ENCODE measurements at regions of chr15 and their contacts with region 1.

Region 1: GRCh38 chr15:87672309-87673288 is 583.9 kb downstream of the NTRK3 start:
- DNase-seq: peak; percentile 41
- ATAC-seq: peak; percentile 86
- H3K4me3 ChIP-seq: no peak overlapping the region
- H3K27ac ChIP-seq: no peak overlapping the region
- H3K4me1 ChIP-seq: no peaks in the 10 kb centered on the region
- H3K27me3 ChIP-seq: no peaks in the 10 kb centered on the region
- CTCF ChIP-seq: peak; percentile 78
- POLR2A ChIP-seq: no peak
- RAD21 ChIP-seq: peak; percentile 80

Region 2: DNA sequence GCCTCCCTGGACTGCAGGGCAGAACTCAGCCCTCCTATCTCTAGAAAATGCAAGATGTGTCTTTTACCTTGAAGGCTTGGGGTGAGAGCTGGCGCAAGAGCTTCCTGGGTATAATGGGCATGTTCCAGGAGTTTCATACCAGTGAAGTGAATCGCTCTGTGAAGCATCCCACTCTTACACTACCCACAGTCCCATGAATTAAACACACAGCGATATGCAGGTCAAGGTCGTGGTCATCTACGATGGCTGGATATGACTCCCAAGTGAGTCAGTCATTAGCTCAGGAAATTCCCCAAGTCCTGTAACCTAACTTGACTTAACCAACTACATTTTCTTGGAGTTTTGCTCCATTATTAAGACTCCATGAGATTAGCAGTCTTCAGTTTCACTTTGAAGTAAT is 144.2 kb after region 1 on chr15:
- CTCF ChIA-PET with region 1: no interaction called
- POLR2A ChIA-PET with region 1: no interaction called
- dilution Hi-C with region 1: no loop called
- in situ Hi-C with region 1: no loop called
- intact Hi-C with region 1: loop called (anchors 1 kb)
- DNase-seq: peak; percentile 99
- ATAC-seq: peak; percentile 96
- H3K4me3 ChIP-seq: no peak overlapping the region
- H3K27ac ChIP-seq: peak overlapping the region; percentile 65
- H3K4me1 ChIP-seq: peaks cover 10% of the 10 kb centered on the region
- H3K27me3 ChIP-seq: no peaks in the 10 kb centered on the region
- CTCF ChIP-seq: no peak
- POLR2A ChIP-seq: no peak
- RAD21 ChIP-seq: peak; percentile 30; the same call in 1 of the 2 replicates

Region 3: GRCh38 chr15:88246666-88247446 is 574.3 kb after region 1 on chr15:
- CTCF ChIA-PET with region 1: interaction called, 3 read pairs
- POLR2A ChIA-PET with region 1: no interaction called
- dilution Hi-C with region 1: no loop called
- in situ Hi-C with region 1: loop called (anchors 10 kb)
- intact Hi-C with region 1: loop called (anchors 1 kb)
- DNase-seq: peak; percentile 39
- ATAC-seq: peak; percentile 99
- H3K4me3 ChIP-seq: no peak overlapping the region
- H3K27ac ChIP-seq: no peak overlapping the region
- H3K4me1 ChIP-seq: no peaks in the 10 kb centered on the region
- H3K27me3 ChIP-seq: no peaks in the 10 kb centered on the region
- CTCF ChIP-seq: peak; percentile 88
- POLR2A ChIP-seq: no peak
- RAD21 ChIP-seq: peak; percentile 84

Region 4: GRCh38 chr15:88258093-88258641 is 585.6 kb after region 1 on chr15:
- CTCF ChIA-PET with region 1: no interaction called
- POLR2A ChIA-PET with region 1: no interaction called
- dilution Hi-C with region 1: no loop called
- in situ Hi-C with region 1: loop called (anchors 10 kb)
- intact Hi-C with region 1: no loop called
- DNase-seq: no peak
- ATAC-seq: no peak
- H3K4me3 ChIP-seq: no peak overlapping the region
- H3K27ac ChIP-seq: no peak overlapping the region
- H3K4me1 ChIP-seq: peaks cover 3% of the 10 kb centered on the region; the same call in 1 of the 2 replicates
- H3K27me3 ChIP-seq: peaks cover 43% of the 10 kb centered on the region
- CTCF ChIP-seq: no peak
- POLR2A ChIP-seq: no peak
- RAD21 ChIP-seq: no peak

Region 5: DNA sequence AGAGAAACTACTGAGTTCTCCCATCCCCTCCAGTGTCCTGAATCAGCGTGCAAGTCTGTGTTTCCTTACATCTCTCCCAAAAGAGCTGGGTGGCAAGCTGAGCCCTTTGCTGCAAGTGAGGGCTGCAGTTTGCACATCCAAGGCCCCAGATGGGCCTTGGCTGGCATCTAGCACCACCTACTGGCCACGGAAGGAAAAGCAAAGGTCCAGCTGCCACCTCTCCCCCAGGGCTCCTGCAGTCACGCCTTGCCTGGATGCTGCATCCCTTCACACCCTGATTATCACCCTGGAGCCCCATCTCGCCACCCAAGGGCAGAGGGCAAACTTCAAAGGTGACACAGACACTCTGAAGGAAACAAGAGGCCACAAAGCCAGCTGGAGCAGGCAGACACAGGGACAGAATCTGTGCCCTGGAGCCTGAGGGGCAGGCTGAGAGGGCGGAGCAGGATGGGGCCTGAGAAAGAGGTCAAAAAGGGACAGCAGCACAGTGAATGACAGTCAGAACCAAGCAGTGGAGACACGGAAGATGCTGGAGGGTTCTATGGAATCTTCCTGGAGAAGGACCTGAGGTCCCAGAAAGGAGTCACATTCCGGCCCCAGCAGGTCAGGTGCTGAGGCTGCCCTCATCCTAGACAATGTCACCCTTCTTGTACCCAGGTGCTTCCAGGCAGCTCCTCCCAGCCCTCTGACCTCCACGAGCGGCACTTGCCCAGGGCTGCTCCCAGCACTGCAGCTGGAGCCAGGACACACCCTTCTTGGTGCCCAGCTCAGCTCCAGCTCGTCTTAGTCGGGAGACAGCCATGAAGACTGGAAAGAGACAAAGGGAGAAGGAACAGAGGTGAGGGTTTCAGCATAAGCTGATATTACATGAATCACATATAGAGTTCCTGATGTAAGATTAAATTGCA is 602.2 kb after region 1 on chr15:
- CTCF ChIA-PET with region 1: no interaction called
- POLR2A ChIA-PET with region 1: no interaction called
- dilution Hi-C with region 1: no loop called
- in situ Hi-C with region 1: no loop called
- intact Hi-C with region 1: loop called (anchors 1 kb)
- DNase-seq: peak; percentile 50
- ATAC-seq: peak; percentile 96
- H3K4me3 ChIP-seq: no peak overlapping the region
- H3K27ac ChIP-seq: no peak overlapping the region
- H3K4me1 ChIP-seq: no peaks in the 10 kb centered on the region
- H3K27me3 ChIP-seq: no peaks in the 10 kb centered on the region; the same call in 1 of the 2 replicates
- CTCF ChIP-seq: peak; percentile 86
- POLR2A ChIP-seq: no peak
- RAD21 ChIP-seq: peak; percentile 94

Region 6: GRCh38 chr15:88450109-88450798 is 777.7 kb after region 1 on chr15:
- CTCF ChIA-PET with region 1: no interaction called
- POLR2A ChIA-PET with region 1: no interaction called
- dilution Hi-C with region 1: no loop called
- in situ Hi-C with region 1: no loop called
- intact Hi-C with region 1: loop called (anchors 1 kb)
- DNase-seq: peak; percentile 66
- ATAC-seq: peak; percentile 71
- H3K4me3 ChIP-seq: no peak overlapping the region
- H3K27ac ChIP-seq: no peak overlapping the region
- H3K4me1 ChIP-seq: peaks cover 1% of the 10 kb centered on the region; the same call in 1 of the 2 replicates
- H3K27me3 ChIP-seq: peaks cover 8% of the 10 kb centered on the region
- CTCF ChIP-seq: peak; percentile 77
- POLR2A ChIP-seq: no peak
- RAD21 ChIP-seq: peak; percentile 84

Measured in IMR-90 (cell line).